Activated T-helper 2 cell treated with anti-CD3 and anti-CD28 coated beads, Interferon-gamma antibody, Interleukin-2, Interleukin-4, amounts not matched to agents 10 μg/mL and 5 μg/mL and 100 μg/mL, durations not matched to agents 14 hours and 24 hours and 36 hours (primary cell): ENCODE measurements at regions of chr12 and their contacts with region 1.

Region 1: DNA sequence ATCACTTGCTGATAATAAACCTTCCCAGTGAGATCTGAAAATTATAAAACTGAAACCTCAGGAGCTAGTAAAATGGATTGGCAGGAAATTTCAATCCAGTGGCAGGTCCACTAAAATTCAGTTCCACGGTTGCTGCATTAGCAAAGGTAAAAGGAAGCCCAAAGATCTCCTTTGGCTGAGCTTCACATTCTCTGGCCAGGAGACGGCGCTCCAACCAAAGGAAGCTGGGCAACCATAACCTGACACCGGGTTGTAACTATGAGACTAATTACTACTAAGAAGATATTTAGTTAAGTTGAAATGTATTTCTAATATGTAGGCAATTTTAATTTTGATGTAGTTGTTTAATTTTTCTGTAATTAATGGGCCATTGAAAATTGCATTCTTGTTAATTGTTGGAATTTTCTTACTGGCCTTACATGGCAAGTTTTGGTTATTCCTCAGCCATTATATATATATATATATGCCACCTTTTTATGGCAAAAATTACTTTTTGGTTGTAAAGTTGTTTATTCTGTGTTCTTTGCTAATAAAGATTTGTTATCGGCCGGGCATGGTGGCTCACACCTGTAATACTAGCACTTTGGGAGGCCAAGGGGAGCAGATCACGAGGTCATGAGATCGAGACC is 17.0 kb downstream of the OR8S1 start:
- DNase-seq: no peak
- H3K4me3 Mint-ChIP-seq: no peak overlapping the region
- H3K27ac Mint-ChIP-seq: no peak overlapping the region
- H3K4me1 Mint-ChIP-seq: peaks cover 4% of the 10 kb centered on the region
- H3K27me3 Mint-ChIP-seq: peaks cover 1% of the 10 kb centered on the region

Region 2: DNA sequence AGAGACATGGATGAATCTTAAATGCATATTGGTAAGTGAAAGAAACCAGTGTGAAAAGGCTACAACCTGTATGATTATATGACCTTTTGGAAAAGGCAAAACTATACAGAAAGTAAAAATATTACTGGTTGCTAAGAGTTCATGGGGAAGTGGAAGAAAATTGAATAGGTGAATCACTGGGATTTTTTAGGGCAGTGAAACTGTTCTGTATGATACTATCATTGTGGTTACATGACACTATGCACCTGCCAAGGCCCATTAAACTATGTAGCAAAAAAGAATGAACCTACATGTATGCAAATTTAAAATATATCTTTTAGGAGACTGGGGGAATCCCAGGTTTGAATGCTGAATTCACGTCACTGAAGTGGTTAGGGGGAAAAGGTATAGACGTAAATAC is 29.6 kb before region 1 on chr12:
- intact Hi-C with region 1: loop called (anchors 2 kb)
- DNase-seq: no peak
- H3K4me3 Mint-ChIP-seq: no peak overlapping the region
- H3K27ac Mint-ChIP-seq: no peak overlapping the region
- H3K4me1 Mint-ChIP-seq: peaks cover 7% of the 10 kb centered on the region
- H3K27me3 Mint-ChIP-seq: no peaks in the 10 kb centered on the region

Region 3: DNA sequence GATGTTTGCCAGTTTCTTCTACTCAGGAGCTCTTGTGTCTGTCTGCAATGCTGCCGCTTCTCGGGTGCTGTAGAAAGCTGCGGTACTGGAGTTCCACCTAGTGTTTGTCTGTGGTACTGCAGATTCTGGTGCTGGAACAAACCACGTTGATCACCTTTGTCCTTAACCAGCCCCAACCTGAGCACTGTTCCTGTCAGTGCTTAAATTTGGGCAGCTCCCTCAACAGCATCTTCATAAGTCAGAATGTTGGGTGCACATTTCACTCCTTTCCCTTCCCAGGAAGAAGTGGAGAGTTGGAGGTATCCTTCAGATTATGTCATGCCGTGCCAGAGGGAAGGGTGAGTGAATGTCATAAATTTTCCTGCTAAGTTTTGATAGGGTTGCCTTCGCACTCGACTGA is 76.1 kb after region 1 on chr12:
- intact Hi-C with region 1: loop called (anchors 1 kb)
- DNase-seq: peak; percentile 64
- H3K4me3 Mint-ChIP-seq: no peak overlapping the region
- H3K27ac Mint-ChIP-seq: no peak overlapping the region
- H3K4me1 Mint-ChIP-seq: no peaks in the 10 kb centered on the region
- H3K27me3 Mint-ChIP-seq: peaks cover 22% of the 10 kb centered on the region

Region 4: GRCh38 chr12:48795480-48796455 is 253.4 kb after region 1 on chr12:
- intact Hi-C with region 1: loop called (anchors 5 kb)
- DNase-seq: peak; percentile 27
- H3K4me3 Mint-ChIP-seq: no peak overlapping the region
- H3K27ac Mint-ChIP-seq: no peak overlapping the region
- H3K4me1 Mint-ChIP-seq: peaks cover 7% of the 10 kb centered on the region
- H3K27me3 Mint-ChIP-seq: peaks cover 8% of the 10 kb centered on the region